ENCODE measurements at regions of chr14 and their contacts with region 1.

Region 1: DNA sequence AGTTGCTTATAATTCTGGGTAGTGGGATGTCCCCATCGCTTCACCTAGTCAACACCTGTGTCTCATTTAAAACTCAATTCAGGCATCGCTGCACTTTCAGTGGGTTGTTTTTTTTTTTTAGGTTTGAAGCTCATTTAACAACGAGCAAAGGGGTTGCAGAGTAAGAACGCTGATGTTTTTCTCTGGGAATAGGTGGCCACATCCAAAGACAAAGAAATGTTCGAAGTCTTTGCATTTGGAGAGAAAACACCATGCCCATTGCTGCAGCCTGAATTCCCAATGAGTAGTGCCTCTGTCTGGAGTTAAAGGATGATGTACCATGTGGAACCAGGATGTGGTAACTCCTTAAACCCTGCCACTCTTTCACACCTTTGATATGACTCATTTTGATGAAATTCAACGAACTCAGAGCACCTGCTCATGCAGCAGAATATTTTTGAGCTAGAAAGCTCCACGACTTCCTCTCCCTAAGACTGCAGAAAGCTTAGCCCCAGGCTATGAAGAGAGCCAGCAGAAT is 35.1 kb upstream of the BATF start:
- DNase-seq: peak; percentile 6 to 50 (median 16)
- H3K4me3 ChIP-seq: no peak overlapping the region
- H3K4me3 Mint-ChIP-seq: peak overlapping the region in 3 of 8 donors; percentile 11 to 59 (median 32)
- H3K27ac ChIP-seq: no peak overlapping the region
- H3K27ac Mint-ChIP-seq: peak overlapping the region in 2 of 7 donors; percentile 33 to 57
- H3K4me1 ChIP-seq: peaks cover 14% of the 10 kb centered on the region
- H3K4me1 Mint-ChIP-seq: peaks cover 8 to 20% (median 15%) of the 10 kb centered on the region in 4 donors
- H3K27me3 ChIP-seq: no peaks in the 10 kb centered on the region
- H3K27me3 Mint-ChIP-seq: no peaks in the 10 kb centered on the region

Region 2: GRCh38 chr14:75109877-75110276 is 377.3 kb before region 1 on chr14:
- CTCF ChIA-PET with region 1: no interaction called
- POLR2A ChIA-PET with region 1: no interaction called
- intact Hi-C with region 1: no loop called
- DNase-seq: no peak
- H3K4me3 ChIP-seq: no peak overlapping the region
- H3K4me3 Mint-ChIP-seq: no peak overlapping the region
- H3K27ac ChIP-seq: no peak overlapping the region
- H3K27ac Mint-ChIP-seq: peak overlapping the region in 2 of 7 donors; percentile 22 to 35
- H3K4me1 ChIP-seq: peaks cover 10% of the 10 kb centered on the region
- H3K4me1 Mint-ChIP-seq: peaks cover 6 to 12% (median 11%) of the 10 kb centered on the region in 4 donors
- H3K27me3 ChIP-seq: no peaks in the 10 kb centered on the region
- H3K27me3 Mint-ChIP-seq: no peaks in the 10 kb centered on the region

Region 3: DNA sequence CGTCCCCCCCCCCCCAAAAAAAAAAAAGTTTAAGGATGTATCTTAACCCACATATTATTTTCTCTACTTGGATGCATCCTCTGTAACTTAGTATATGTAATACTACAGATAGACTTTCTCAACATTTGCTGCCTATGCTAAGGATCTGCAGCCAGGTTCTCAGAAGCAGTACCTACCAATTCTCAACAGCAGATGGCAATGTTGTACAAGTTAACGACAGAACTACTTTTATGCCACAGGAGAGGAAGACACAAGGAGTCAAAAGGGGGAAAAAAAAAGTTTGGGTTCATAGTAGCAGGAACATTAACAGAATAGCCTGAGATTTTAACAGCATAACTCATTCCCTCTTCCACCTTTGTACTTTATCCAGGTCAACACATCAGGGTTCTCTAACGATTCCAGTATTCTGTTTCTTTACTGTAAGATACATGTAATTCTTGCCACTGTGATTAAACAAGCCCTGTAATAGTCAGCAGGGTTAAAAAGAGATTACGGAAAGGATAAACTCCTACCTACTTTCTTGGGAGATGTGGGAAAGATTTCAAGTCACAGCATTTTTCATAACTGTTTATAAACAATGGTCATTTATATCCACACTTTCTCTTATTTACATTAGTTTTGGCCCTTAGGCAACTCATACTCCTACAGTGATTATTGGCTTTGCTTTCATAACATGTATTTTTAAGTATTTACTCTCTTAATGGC is 354.7 kb before region 1 on chr14:
- CTCF ChIA-PET with region 1: interaction called, 11 read pairs
- POLR2A ChIA-PET with region 1: interaction called, 4 read pairs
- intact Hi-C with region 1: loop called (anchors 2 kb)
- DNase-seq: peak; percentile 65 to 76 (median 74)
- H3K4me3 ChIP-seq: no peak overlapping the region
- H3K4me3 Mint-ChIP-seq: peak overlapping the region in 1 of 8 donors; percentile 5
- H3K27ac ChIP-seq: no peak overlapping the region
- H3K27ac Mint-ChIP-seq: peak overlapping the region; percentile 10 to 90 (median 72)
- H3K4me1 ChIP-seq: peaks cover 12% of the 10 kb centered on the region
- H3K4me1 Mint-ChIP-seq: peaks cover 13 to 18% (median 17%) of the 10 kb centered on the region in 4 donors
- H3K27me3 ChIP-seq: no peaks in the 10 kb centered on the region
- H3K27me3 Mint-ChIP-seq: no peaks in the 10 kb centered on the region

Region 4: GRCh38 chr14:75476274-75476995 is 10.8 kb before region 1 on chr14:
- CTCF ChIA-PET with region 1: interaction called, 23 read pairs
- POLR2A ChIA-PET with region 1: no interaction called
- intact Hi-C with region 1: no loop called
- DNase-seq: no peak
- H3K4me3 ChIP-seq: no peak overlapping the region
- H3K4me3 Mint-ChIP-seq: no peak overlapping the region
- H3K27ac ChIP-seq: no peak overlapping the region
- H3K27ac Mint-ChIP-seq: no peak overlapping the region
- H3K4me1 ChIP-seq: no peaks in the 10 kb centered on the region
- H3K4me1 Mint-ChIP-seq: no peaks in the 10 kb centered on the region
- H3K27me3 ChIP-seq: no peaks in the 10 kb centered on the region
- H3K27me3 Mint-ChIP-seq: peaks cover 4% of the 10 kb centered on the region in 2 donors

Region 5: GRCh38 chr14:75522224-75522982 is 35.2 kb after region 1 on chr14 and contains the start of gene BATF:
- CTCF ChIA-PET with region 1: interaction called, 31 read pairs
- POLR2A ChIA-PET with region 1: interaction called, 6 read pairs
- intact Hi-C with region 1: no loop called
- DNase-seq: peak; percentile 79 to 90 (median 82)
- H3K4me3 ChIP-seq: peak within 1 kb of the TSS; percentile 81 to 90
- H3K4me3 Mint-ChIP-seq: peak within 1 kb of the TSS; percentile 96 to 100 (median 99)
- H3K27ac ChIP-seq: peak within 1 kb of the TSS; percentile 88
- H3K27ac Mint-ChIP-seq: peak within 1 kb of the TSS; percentile 94 to 99 (median 98)
- H3K4me1 ChIP-seq: peaks cover 69% of the 10 kb centered on the region
- H3K4me1 Mint-ChIP-seq: peaks cover 47 to 84% (median 65%) of the 10 kb centered on the region in 4 donors
- H3K27me3 ChIP-seq: no peaks in the 10 kb centered on the region
- H3K27me3 Mint-ChIP-seq: no peaks in the 10 kb centered on the region
- total RNA-seq, gene BATF: 17.1 to 20.6 TPM

Region 6: GRCh38 chr14:75654127-75654732 is 167.0 kb after region 1 on chr14:
- CTCF ChIA-PET with region 1: interaction called, 8 read pairs
- POLR2A ChIA-PET with region 1: no interaction called
- intact Hi-C with region 1: loop called (anchors 1 kb)
- DNase-seq: peak; percentile 71 to 79 (median 74)
- H3K4me3 ChIP-seq: no peak overlapping the region
- H3K4me3 Mint-ChIP-seq: no peak overlapping the region
- H3K27ac ChIP-seq: no peak overlapping the region
- H3K27ac Mint-ChIP-seq: peak overlapping the region in 4 of 7 donors; percentile 5 to 53 (median 36)
- H3K4me1 ChIP-seq: peaks cover 7% of the 10 kb centered on the region
- H3K4me1 Mint-ChIP-seq: peaks cover 4 to 16% (median 9%) of the 10 kb centered on the region in 4 donors
- H3K27me3 ChIP-seq: no peaks in the 10 kb centered on the region
- H3K27me3 Mint-ChIP-seq: no peaks in the 10 kb centered on the region